CD8-positive, alpha-beta memory T cell (primary cell): ENCODE measurements at regions of chr13 and their contacts with region 1.

Region 1: DNA sequence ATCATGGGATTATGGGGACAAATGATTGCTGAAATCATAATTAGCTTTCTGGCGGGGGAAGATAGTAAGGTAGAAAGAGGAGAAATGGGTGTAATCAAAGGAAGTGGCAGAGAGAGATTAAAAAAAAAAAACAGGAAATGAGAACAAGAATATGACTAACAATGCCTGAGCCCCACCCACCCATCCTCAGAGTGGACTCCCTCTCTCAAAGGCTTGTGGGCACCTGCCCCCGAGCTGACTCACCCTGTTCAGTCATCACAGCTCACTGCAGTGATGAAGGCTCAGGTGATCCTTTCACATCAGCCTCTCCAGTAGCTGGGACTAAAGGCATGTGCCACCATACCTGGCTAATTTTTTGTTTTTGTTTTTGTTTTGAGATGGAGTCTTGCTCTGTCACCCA is 26.4 kb upstream of the TPT1 start:
- DNase-seq: peak; percentile 79 to 96 (median 83)
- H3K4me3 ChIP-seq: no peak overlapping the region
- H3K4me3 Mint-ChIP-seq: peak overlapping the region; percentile 1 to 74 (median 69)
- H3K27ac ChIP-seq: peak overlapping the region; percentile 52
- H3K27ac Mint-ChIP-seq: peak overlapping the region; percentile 52 to 96 (median 91)
- H3K4me1 ChIP-seq: peaks cover 30% of the 10 kb centered on the region
- H3K4me1 Mint-ChIP-seq: peaks cover 35 to 64% (median 61%) of the 10 kb centered on the region in 3 donors
- H3K27me3 ChIP-seq: no peaks in the 10 kb centered on the region
- H3K27me3 Mint-ChIP-seq: no peaks in the 10 kb centered on the region

Region 2: GRCh38 chr13:45340422-45340925 is 26.9 kb before region 1 on chr13:
- CTCF ChIA-PET with region 1: interaction called, 30 read pairs
- POLR2A ChIA-PET with region 1: interaction called, 26 read pairs
- DNase-seq: peak; percentile 74 to 89 (median 80)
- H3K4me3 ChIP-seq: peak overlapping the region; percentile 71
- H3K4me3 Mint-ChIP-seq: peak overlapping the region; percentile 95 to 100 (median 98)
- H3K27ac ChIP-seq: peak overlapping the region; percentile 96
- H3K27ac Mint-ChIP-seq: peak overlapping the region; percentile 78 to 100 (median 100)
- H3K4me1 ChIP-seq: peaks cover 55% of the 10 kb centered on the region
- H3K4me1 Mint-ChIP-seq: peaks cover 62 to 80% (median 72%) of the 10 kb centered on the region in 3 donors
- H3K27me3 ChIP-seq: no peaks in the 10 kb centered on the region
- H3K27me3 Mint-ChIP-seq: peaks cover 0 to 6% of the 10 kb centered on the region in 2 donors

Region 3: GRCh38 chr13:45385907-45386553 is 18.7 kb after region 1 on chr13:
- CTCF ChIA-PET with region 1: interaction called, 14 read pairs
- POLR2A ChIA-PET with region 1: no interaction called
- DNase-seq: no peak
- H3K4me3 ChIP-seq: no peak overlapping the region
- H3K4me3 Mint-ChIP-seq: no peak overlapping the region
- H3K27ac ChIP-seq: no peak overlapping the region
- H3K27ac Mint-ChIP-seq: peak overlapping the region in 2 of 8 donors; percentile 32 to 72
- H3K4me1 ChIP-seq: no peaks in the 10 kb centered on the region
- H3K4me1 Mint-ChIP-seq: peaks cover 6 to 13% (median 6%) of the 10 kb centered on the region in 3 donors
- H3K27me3 ChIP-seq: no peaks in the 10 kb centered on the region
- H3K27me3 Mint-ChIP-seq: no peaks in the 10 kb centered on the region

Region 4: GRCh38 chr13:45406421-45406820 is 39.1 kb after region 1 on chr13:
- CTCF ChIA-PET with region 1: interaction called, 15 read pairs
- POLR2A ChIA-PET with region 1: no interaction called
- DNase-seq: no peak
- H3K4me3 ChIP-seq: no peak overlapping the region
- H3K4me3 Mint-ChIP-seq: no peak overlapping the region
- H3K27ac ChIP-seq: no peak overlapping the region
- H3K27ac Mint-ChIP-seq: peak overlapping the region in 5 of 8 donors; percentile 0 to 88 (median 76)
- H3K4me1 ChIP-seq: no peaks in the 10 kb centered on the region
- H3K4me1 Mint-ChIP-seq: peaks cover 9 to 18% (median 15%) of the 10 kb centered on the region in 3 donors
- H3K27me3 ChIP-seq: no peaks in the 10 kb centered on the region
- H3K27me3 Mint-ChIP-seq: no peaks in the 10 kb centered on the region

Region 5: GRCh38 chr13:45464687-45465453 is 97.5 kb after region 1 on chr13 and contains the start of gene COG3:
- CTCF ChIA-PET with region 1: interaction called, 19 read pairs
- POLR2A ChIA-PET with region 1: interaction called, 6 read pairs
- DNase-seq: peak; percentile 93 to 97 (median 96)
- H3K4me3 ChIP-seq: peak within 1 kb of the TSS; percentile 58
- H3K4me3 Mint-ChIP-seq: peak within 1 kb of the TSS; percentile 91 to 97 (median 93)
- H3K27ac ChIP-seq: peak within 1 kb of the TSS; percentile 89
- H3K27ac Mint-ChIP-seq: peak within 1 kb of the TSS; percentile 76 to 98 (median 94)
- H3K4me1 ChIP-seq: peaks cover 40% of the 10 kb centered on the region
- H3K4me1 Mint-ChIP-seq: peaks cover 43 to 57% (median 53%) of the 10 kb centered on the region in 3 donors
- H3K27me3 ChIP-seq: no peaks in the 10 kb centered on the region
- H3K27me3 Mint-ChIP-seq: peaks cover 0 to 3% of the 10 kb centered on the region in 2 donors
- total RNA-seq, gene COG3: 19.3 to 20.2 TPM